Activated CD8-positive, alpha-beta T cell treated with anti-CD3 and anti-CD28 coated beads for 36 hours (primary cell): ENCODE measurements at regions of chr6 and their contacts with region 1.

Region 1: DNA sequence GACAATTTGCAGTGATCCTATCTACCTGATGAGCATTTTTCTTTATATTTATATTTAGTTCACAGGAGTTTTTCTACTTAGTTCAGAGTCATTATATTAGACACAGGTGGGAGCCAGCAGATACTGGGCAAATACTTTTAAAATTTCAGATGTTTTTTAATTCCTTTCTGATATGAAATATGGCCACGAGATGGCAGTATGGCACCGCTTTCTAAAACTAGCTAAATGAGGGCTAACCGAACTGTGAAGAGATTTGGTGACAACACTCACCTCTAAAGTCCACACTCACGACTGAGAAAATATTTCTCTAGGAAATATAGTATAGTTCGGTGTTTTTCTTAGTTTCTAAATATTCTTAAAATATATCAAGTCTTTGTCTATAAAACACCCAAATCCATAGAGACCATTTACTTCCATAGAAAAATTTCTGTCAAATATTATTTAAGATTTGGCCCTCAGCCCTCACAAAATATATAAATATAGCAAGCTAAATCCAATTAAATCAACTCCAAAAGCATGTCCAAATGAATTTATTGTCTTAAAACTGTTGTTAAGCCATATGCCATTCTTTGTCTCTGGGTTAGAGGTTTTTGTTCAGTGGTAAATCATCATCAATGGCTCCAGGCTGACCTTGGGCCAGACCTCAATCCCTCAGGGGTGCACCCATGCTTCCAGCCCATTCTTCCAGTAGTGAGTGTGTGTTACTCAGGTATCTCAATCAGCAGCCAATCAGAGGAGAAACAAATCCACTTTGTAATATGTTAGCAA is 63.6 kb downstream of the HUS1B start:
- DNase-seq: peak; percentile 85
- ATAC-seq: peak; percentile 79
- H3K4me3 Mint-ChIP-seq: no peak overlapping the region
- H3K27ac Mint-ChIP-seq: peak overlapping the region; percentile 35
- H3K4me1 Mint-ChIP-seq: peaks cover 7% of the 10 kb centered on the region
- H3K27me3 Mint-ChIP-seq: no peaks in the 10 kb centered on the region
- CTCF ChIP-seq: peak; percentile 74

Region 2: GRCh38 chr6:582370-582769 is 11.0 kb before region 1 on chr6:
- CTCF ChIA-PET with region 1: interaction called, 42 read pairs
- POLR2A ChIA-PET with region 1: interaction called, 5 read pairs
- intact Hi-C with region 1: no loop called
- DNase-seq: no peak
- ATAC-seq: peak; percentile 24
- H3K4me3 Mint-ChIP-seq: no peak overlapping the region
- H3K27ac Mint-ChIP-seq: peak overlapping the region; percentile 34
- H3K4me1 Mint-ChIP-seq: peaks cover 20% of the 10 kb centered on the region
- H3K27me3 Mint-ChIP-seq: no peaks in the 10 kb centered on the region
- CTCF ChIP-seq: no peak

Region 3: GRCh38 chr6:617445-618100 is 24.2 kb after region 1 on chr6:
- CTCF ChIA-PET with region 1: interaction called, 10 read pairs
- POLR2A ChIA-PET with region 1: no interaction called
- intact Hi-C with region 1: no loop called
- DNase-seq: peak; percentile 10
- ATAC-seq: no peak
- H3K4me3 Mint-ChIP-seq: no peak overlapping the region
- H3K27ac Mint-ChIP-seq: no peak overlapping the region
- H3K4me1 Mint-ChIP-seq: no peaks in the 10 kb centered on the region
- H3K27me3 Mint-ChIP-seq: no peaks in the 10 kb centered on the region
- CTCF ChIP-seq: no peak

Region 4: GRCh38 chr6:692855-693722 is 99.8 kb after region 1 on chr6 and contains the start of gene EXOC2:
- CTCF ChIA-PET with region 1: interaction called, 13 read pairs
- POLR2A ChIA-PET with region 1: no interaction called
- intact Hi-C with region 1: no loop called
- DNase-seq: peak; percentile 90
- ATAC-seq: peak; percentile 86
- H3K4me3 Mint-ChIP-seq: peak within 1 kb of the TSS; percentile 85
- H3K27ac Mint-ChIP-seq: peak within 1 kb of the TSS; percentile 89
- H3K4me1 Mint-ChIP-seq: peaks cover 29% of the 10 kb centered on the region
- H3K27me3 Mint-ChIP-seq: no peaks in the 10 kb centered on the region
- CTCF ChIP-seq: no peak
- total RNA-seq, gene EXOC2: 29.9 to 30.2 TPM

Region 5: GRCh38 chr6:1381481-1382330 is 788.4 kb after region 1 on chr6:
- CTCF ChIA-PET with region 1: interaction called, 10 read pairs
- POLR2A ChIA-PET with region 1: no interaction called
- intact Hi-C with region 1: loop called (anchors 5 kb)
- DNase-seq: peak; percentile 55
- ATAC-seq: peak; percentile 76
- H3K4me3 Mint-ChIP-seq: no peak overlapping the region
- H3K27ac Mint-ChIP-seq: no peak overlapping the region
- H3K4me1 Mint-ChIP-seq: peaks cover 28% of the 10 kb centered on the region
- H3K27me3 Mint-ChIP-seq: peaks cover 69% of the 10 kb centered on the region
- CTCF ChIP-seq: peak; percentile 95